Activated CD4-positive, alpha-beta T cell treated with anti-CD3 and anti-CD28 coated beads for 36 hours (primary cell): ENCODE measurements at regions of chr16 and their contacts with region 1.

Region 1: DNA sequence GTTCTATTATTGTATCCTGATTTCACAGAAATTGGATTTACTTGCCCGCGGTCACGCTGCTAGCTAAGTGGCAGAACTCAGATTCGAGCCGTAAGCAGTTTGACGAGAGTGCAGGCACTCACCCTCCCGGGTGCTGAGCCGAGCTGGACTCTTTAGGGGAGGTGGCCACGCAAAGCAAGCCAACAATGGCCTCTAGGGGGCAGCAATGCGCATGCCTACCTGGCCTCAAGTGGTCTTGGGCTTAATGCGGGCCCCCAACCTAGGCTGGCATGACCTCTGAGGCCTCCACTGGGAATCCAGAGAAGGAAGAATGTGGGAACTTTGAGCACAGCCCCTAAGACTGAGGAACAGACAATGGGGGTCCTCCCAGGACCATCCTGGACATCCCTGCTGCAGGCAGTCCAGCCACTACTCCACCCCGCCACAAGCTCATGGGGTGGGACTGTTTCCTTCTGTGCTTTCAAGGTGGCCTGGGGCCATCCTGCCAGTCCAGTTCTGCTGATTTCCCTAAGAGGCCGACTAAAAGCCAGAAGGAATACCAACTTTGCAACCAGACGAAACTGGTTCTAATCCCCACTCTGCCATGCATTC is 276.5 kb downstream of the XYLT1 start:
- DNase-seq: peak; percentile 77
- ATAC-seq: peak; percentile 47
- H3K4me3 Mint-ChIP-seq: no peak overlapping the region
- H3K27ac Mint-ChIP-seq: no peak overlapping the region
- H3K4me1 Mint-ChIP-seq: no peaks in the 10 kb centered on the region
- H3K27me3 Mint-ChIP-seq: no peaks in the 10 kb centered on the region

Region 2: GRCh38 chr16:16861546-16861945 is 332.7 kb before region 1 on chr16:
- CTCF ChIA-PET with region 1: no interaction called
- POLR2A ChIA-PET with region 1: no interaction called
- intact Hi-C with region 1: loop called in 1 of 2 experiments (anchors 2 kb)
- DNase-seq: peak; percentile 70
- ATAC-seq: no peak
- H3K4me3 Mint-ChIP-seq: no peak overlapping the region
- H3K27ac Mint-ChIP-seq: no peak overlapping the region
- H3K4me1 Mint-ChIP-seq: no peaks in the 10 kb centered on the region
- H3K27me3 Mint-ChIP-seq: peaks cover 6% of the 10 kb centered on the region

Region 3: DNA sequence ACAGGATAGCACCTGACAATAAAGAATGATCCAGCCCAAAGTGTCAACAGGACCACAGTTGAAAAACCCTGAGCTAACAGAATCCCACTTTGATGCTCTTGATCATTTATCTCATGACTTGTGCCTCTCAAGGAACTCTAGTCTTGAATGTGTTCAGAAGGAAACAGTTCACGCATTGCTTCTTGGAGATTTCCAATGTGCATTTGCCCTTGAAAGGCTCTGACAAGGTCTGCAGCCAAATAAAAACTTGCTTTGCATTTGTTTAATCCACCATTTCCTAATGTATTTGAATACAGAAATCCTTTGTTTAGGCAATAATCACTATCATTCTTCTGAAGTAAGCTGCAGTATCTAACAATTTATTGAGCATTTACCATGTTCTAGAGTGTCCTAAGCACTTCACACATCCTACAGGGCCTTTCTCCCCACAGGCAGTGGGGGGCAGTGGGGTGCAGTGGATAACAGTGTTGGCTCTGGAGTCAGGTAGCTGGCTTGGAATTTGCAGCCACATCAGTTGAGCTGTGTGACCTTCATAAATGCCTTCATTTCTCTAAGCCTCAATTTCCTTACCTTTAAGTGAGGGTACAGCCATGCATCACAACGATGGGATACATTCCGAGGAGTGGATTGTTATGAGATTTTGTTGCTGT is 36.8 kb after region 1 on chr16:
- CTCF ChIA-PET with region 1: no interaction called
- POLR2A ChIA-PET with region 1: no interaction called
- intact Hi-C with region 1: loop called in 1 of 2 experiments (anchors 5 kb)
- DNase-seq: peak; percentile 28
- ATAC-seq: no peak
- H3K4me3 Mint-ChIP-seq: no peak overlapping the region
- H3K27ac Mint-ChIP-seq: no peak overlapping the region
- H3K4me1 Mint-ChIP-seq: peaks cover 2% of the 10 kb centered on the region
- H3K27me3 Mint-ChIP-seq: no peaks in the 10 kb centered on the region

Region 4: GRCh38 chr16:17252064-17252463 is 57.8 kb after region 1 on chr16:
- CTCF ChIA-PET with region 1: no interaction called
- POLR2A ChIA-PET with region 1: no interaction called
- intact Hi-C with region 1: no loop called
- DNase-seq: no peak
- ATAC-seq: peak; percentile 16
- H3K4me3 Mint-ChIP-seq: no peak overlapping the region
- H3K27ac Mint-ChIP-seq: no peak overlapping the region
- H3K4me1 Mint-ChIP-seq: peaks cover 2% of the 10 kb centered on the region
- H3K27me3 Mint-ChIP-seq: no peaks in the 10 kb centered on the region

Region 5: GRCh38 chr16:17432901-17433576 is 238.8 kb after region 1 on chr16:
- CTCF ChIA-PET with region 1: no interaction called
- POLR2A ChIA-PET with region 1: no interaction called
- intact Hi-C with region 1: no loop called
- DNase-seq: no peak
- ATAC-seq: no peak
- H3K4me3 Mint-ChIP-seq: no peak overlapping the region
- H3K27ac Mint-ChIP-seq: no peak overlapping the region
- H3K4me1 Mint-ChIP-seq: peaks cover 3% of the 10 kb centered on the region
- H3K27me3 Mint-ChIP-seq: no peaks in the 10 kb centered on the region